ENCODE measurements at regions of chr7 and their contacts with region 1.

Region 1: DNA sequence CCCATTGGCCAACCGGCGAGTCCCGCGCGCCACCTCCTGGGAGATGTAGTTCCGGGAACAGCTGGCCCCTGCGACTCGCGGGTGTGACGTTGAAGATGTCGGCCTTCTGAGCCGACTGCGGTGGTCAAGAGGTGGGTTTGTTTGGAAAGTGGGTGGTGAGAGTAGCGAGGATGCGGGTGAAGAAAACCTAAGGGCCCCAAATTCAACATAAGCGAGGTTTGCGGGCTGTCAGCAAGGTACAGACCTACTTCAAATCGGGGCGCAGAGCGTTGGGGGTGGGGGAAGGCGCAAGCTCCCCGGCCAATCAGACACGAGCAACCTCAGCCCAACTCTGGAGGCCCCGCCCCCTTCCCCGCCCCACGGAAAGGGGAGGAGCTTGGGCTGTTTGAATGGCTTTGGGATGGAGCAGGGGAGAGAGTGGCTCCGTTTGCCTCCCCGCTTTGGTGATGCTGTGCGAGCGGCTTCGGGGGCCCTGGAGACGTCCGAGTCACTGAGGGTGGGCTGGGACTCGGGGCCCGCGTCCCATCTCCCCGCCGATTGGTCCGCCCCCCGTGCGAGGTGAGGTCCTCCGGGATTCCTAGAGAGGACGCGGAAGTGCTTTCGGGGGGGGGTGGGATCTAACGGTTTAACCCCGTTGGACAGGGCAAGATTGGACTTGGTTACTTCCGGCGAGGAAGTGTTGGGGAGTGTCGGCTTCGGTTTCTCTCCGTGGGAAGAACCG is at the start of gene ZKSCAN5:
- DNase-seq: peak; percentile 99
- ATAC-seq: peak; percentile 87
- H3K4me3 Mint-ChIP-seq: peak within 1 kb of the TSS; percentile 87
- H3K27ac Mint-ChIP-seq: peak within 1 kb of the TSS; percentile 97
- H3K4me1 Mint-ChIP-seq: peaks cover 25% of the 10 kb centered on the region
- H3K27me3 Mint-ChIP-seq: no peaks in the 10 kb centered on the region
- total RNA-seq, gene ZKSCAN5: 10.1 to 12.1 TPM

Region 2: DNA sequence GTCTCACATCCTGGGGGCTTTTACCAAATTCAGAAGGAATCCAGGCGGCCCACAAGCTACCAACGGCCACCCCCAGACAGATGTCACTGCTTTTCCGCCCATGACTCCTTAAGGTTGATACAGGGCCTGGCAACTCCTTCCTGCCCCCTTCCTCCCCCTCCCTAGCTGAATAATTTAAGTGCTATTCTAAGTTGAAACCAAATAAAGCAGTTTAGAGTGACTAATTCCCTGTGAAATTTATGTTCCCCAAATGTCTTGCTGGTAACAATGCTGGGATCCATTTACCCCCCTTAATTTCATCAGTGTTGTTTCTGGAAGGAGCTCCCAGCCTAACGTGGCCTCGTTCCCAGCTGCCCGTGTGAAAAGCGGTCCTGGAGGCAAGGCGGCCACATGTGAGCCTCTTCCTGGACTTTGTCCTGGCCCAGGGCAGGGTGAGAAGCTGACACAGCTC is 744.5 kb before region 1 on chr7:
- CTCF ChIA-PET with region 1: no interaction called
- POLR2A ChIA-PET with region 1: no interaction called
- intact Hi-C with region 1: no loop called
- DNase-seq: no peak
- ATAC-seq: no peak
- H3K4me3 Mint-ChIP-seq: no peak overlapping the region
- H3K27ac Mint-ChIP-seq: no peak overlapping the region
- H3K4me1 Mint-ChIP-seq: no peaks in the 10 kb centered on the region
- H3K27me3 Mint-ChIP-seq: peaks cover 12% of the 10 kb centered on the region

Region 3: GRCh38 chr7:99143853-99144672 is 360.7 kb before region 1 on chr7 and contains the start of gene SMURF1:
- CTCF ChIA-PET with region 1: no interaction called
- POLR2A ChIA-PET with region 1: no interaction called
- intact Hi-C with region 1: loop called in 1 of 2 experiments (anchors 5 kb)
- DNase-seq: peak; percentile 83
- ATAC-seq: peak; percentile 37
- H3K4me3 Mint-ChIP-seq: peak within 1 kb of the TSS; percentile 91
- H3K27ac Mint-ChIP-seq: peak within 1 kb of the TSS; percentile 93
- H3K4me1 Mint-ChIP-seq: peaks cover 35% of the 10 kb centered on the region
- H3K27me3 Mint-ChIP-seq: peaks cover 5% of the 10 kb centered on the region
- total RNA-seq, gene SMURF1: 12.4 to 13.4 TPM

Region 4: GRCh38 chr7:99438573-99439480 is 65.9 kb before region 1 on chr7 and contains the starts of genes CPSF4 and PTCD1:
- CTCF ChIA-PET with region 1: no interaction called
- POLR2A ChIA-PET with region 1: no interaction called
- intact Hi-C with region 1: loop called (anchors 1 to 2 kb)
- DNase-seq: peak; percentile 96
- ATAC-seq: peak; percentile 93
- H3K4me3 Mint-ChIP-seq: peak within 1 kb of the TSS; percentile 91
- H3K27ac Mint-ChIP-seq: peak within 1 kb of the TSS; percentile 98
- H3K4me1 Mint-ChIP-seq: peaks cover 36% of the 10 kb centered on the region
- H3K27me3 Mint-ChIP-seq: no peaks in the 10 kb centered on the region
- total RNA-seq, gene CPSF4: 56.1 to 57.9 TPM
- total RNA-seq, gene PTCD1: 4.7 to 7.7 TPM

Region 5: DNA sequence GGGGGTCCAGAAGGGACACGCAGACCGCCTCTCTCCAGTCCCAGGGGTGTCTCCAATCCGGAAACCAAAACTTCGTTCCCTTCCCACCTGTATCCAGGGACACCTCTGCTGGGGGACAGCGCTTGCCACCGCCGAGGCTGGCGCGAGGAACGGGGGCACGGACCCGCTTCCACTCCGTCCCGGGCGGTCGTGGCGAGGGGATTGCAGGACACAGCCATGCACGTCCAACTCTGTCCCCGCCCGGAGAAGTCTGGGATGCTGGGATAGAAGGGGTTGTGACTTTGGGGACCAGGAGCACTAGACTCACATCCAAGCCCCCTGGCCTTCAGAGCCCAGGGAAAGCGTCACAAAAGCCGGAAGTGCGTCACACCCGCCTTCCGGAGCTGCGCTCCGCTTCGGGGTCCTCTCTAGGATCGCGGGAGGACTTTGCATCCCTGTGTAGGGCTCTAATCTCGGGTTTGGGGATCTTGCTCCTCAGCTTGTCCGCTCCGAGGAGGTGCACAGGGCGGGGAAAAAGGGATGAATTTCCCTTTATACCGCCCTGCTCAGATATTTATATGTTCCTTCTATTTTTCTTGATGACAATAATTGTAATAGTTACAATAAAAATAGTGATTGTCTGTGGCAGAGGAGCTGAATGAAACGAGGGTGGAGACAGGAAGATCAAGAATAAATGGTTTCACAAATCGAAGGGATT is 47.2 kb after region 1 on chr7 and contains the start of gene FAM200A:
- CTCF ChIA-PET with region 1: no interaction called
- POLR2A ChIA-PET with region 1: interaction called, 5 read pairs
- intact Hi-C with region 1: loop called (anchors 1 kb)
- DNase-seq: peak; percentile 92
- ATAC-seq: peak; percentile 99
- H3K4me3 Mint-ChIP-seq: peak within 1 kb of the TSS; percentile 75
- H3K27ac Mint-ChIP-seq: peak within 1 kb of the TSS; percentile 62
- H3K4me1 Mint-ChIP-seq: peaks cover 30% of the 10 kb centered on the region
- H3K27me3 Mint-ChIP-seq: no peaks in the 10 kb centered on the region
- total RNA-seq, gene FAM200A: 4.9 to 5.5 TPM

Region 6: GRCh38 chr7:99616359-99617191 is 111.8 kb after region 1 on chr7 and contains the start of gene ZSCAN25:
- CTCF ChIA-PET with region 1: no interaction called
- POLR2A ChIA-PET with region 1: interaction called, 4 read pairs
- intact Hi-C with region 1: loop called (anchors 1 to 10 kb)
- DNase-seq: peak; percentile 92
- ATAC-seq: peak; percentile 93
- H3K4me3 Mint-ChIP-seq: peak within 1 kb of the TSS; percentile 92
- H3K27ac Mint-ChIP-seq: peak within 1 kb of the TSS; percentile 96
- H3K4me1 Mint-ChIP-seq: peaks cover 44% of the 10 kb centered on the region
- H3K27me3 Mint-ChIP-seq: no peaks in the 10 kb centered on the region
- total RNA-seq, gene ZSCAN25: 20.5 to 25.2 TPM

Region 7: DNA sequence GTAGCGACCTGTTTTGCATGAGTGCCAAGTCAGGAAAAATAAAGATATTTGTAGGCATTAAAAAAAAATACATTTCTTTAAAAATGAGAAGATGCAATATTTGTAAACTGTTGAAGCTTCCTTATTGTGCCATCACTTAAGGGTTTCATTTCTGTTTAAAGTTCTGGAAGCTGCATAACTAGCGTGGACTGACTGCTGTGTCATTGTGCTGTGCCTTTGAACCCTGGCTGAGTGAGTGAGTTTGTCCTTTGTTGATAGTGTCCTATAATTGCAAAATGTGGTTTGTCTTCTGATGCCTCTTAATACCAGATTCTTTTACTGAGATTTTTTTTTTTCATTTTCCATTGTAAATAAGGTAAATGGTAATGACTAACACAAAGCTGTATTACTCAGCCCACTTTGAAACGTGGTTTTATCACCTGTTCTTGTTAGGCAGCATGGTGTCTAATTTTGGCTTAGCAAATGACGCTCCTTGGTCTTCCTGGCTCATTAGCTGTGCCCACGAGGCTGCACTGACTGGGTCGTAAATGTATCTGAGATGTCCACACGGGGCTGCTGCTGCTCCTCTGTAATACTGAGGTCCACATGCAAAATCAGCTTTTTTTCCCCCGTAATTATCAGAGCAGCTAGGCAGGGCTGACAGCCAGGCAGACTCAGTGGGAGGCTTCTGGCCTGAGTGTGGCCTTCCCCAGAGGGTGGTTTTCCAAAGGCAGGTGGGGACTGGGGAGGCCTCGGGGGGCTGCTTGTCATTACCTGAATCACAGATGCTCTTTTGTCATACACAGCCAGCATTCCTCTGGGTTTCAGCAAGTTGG is 126.7 kb after region 1 on chr7:
- CTCF ChIA-PET with region 1: no interaction called
- POLR2A ChIA-PET with region 1: no interaction called
- intact Hi-C with region 1: no loop called
- DNase-seq: peak; percentile 63
- ATAC-seq: peak; percentile 88
- H3K4me3 Mint-ChIP-seq: no peak overlapping the region
- H3K27ac Mint-ChIP-seq: peak overlapping the region; percentile 88
- H3K4me1 Mint-ChIP-seq: peaks cover 48% of the 10 kb centered on the region
- H3K27me3 Mint-ChIP-seq: no peaks in the 10 kb centered on the region